RWPE1 (cell line): ENCODE measurements at regions of chr11 and their contacts with region 1.

Region 1: GRCh38 chr11:62591448-62592145 is at the start of gene TUT1:
- DNase-seq: peak; percentile 89
- H3K27ac ChIP-seq: peak within 1 kb of the TSS; percentile 91
- CTCF ChIP-seq: no peak

Region 2: DNA sequence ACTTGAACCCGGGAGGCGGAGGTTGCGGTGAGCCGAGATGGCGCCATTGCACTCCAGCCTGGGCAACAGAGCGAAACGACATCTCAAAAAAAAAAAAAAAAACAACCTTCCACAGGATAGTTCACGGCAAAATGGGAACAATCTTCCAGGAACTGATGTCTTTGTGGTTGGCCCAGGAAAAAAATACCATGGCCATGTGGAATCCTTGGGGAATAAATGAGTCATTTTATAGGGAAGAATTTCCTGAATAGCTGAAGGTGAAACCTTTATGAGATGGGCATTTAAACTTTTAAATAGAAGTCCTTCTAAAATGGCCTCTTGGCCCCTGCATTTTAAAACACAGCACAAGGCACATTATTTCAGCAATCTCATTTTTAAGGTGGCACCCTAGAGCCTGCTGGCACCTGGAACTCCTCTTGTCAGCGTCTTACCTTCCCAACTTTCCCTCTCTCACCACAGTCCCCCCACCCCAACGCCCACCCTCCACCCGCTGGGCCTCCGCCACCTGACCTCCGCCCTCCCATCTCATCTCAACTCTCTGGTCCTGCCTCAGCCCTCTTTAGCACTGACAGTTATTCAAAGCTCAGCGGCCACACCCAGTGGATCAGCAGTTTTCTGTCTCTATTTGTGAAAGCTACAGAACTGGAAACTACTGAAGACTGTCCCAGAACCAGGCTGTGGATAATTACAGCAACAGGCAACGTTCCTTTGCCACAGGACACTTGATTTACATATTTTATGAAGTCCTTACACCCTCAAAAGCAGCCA is 129.7 kb before region 1 on chr11:
- CTCF ChIA-PET with region 1: no interaction called
- POLR2A ChIA-PET with region 1: no interaction called
- DNase-seq: no peak
- H3K27ac ChIP-seq: peak overlapping the region; percentile 41; the same call in 1 of the 2 replicates
- CTCF ChIP-seq: no peak

Region 3: DNA sequence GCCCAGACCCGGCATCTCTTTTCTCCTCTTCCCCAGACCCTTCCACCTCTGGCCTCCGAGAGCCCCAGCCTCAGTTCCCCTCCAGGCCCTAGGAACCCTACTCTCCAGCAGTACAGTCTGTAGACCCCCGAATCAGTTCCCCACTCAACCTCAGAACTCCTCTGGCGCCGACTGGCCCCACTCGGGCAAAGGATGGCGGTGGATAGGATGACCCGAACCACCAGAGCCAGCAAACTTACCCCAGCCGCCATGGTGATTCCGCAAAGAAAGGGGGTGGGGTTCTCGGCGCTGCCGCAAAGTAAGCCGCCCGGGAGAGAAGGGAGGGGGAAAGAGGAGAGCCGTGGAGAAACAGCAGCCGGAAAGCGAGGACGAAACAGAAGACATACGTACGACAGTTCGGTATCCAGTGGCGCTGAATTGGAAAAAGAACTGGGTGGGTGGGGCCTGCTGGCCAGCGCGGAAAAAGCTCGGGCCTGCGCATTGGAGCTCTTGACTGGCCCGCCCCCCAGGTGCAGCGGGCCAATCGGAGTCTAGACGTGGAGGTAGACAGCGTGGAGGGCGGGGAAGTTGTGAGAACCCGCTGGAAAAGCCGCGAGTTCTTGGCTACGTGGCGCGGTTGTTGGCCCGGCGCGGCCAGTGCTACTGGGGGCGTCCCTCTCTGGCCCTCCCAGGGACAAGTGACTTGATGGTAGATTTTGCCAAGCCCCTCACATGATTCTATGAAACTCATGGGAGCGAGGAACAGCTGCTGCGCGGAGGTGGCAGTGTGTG is 17.8 kb before region 1 on chr11 and contains the start of gene EEF1G:
- CTCF ChIA-PET with region 1: interaction called, 3 read pairs
- POLR2A ChIA-PET with region 1: interaction called, 12 read pairs
- DNase-seq: peak; percentile 99
- H3K27ac ChIP-seq: peak within 1 kb of the TSS; percentile 86
- CTCF ChIP-seq: no peak

Region 4: DNA sequence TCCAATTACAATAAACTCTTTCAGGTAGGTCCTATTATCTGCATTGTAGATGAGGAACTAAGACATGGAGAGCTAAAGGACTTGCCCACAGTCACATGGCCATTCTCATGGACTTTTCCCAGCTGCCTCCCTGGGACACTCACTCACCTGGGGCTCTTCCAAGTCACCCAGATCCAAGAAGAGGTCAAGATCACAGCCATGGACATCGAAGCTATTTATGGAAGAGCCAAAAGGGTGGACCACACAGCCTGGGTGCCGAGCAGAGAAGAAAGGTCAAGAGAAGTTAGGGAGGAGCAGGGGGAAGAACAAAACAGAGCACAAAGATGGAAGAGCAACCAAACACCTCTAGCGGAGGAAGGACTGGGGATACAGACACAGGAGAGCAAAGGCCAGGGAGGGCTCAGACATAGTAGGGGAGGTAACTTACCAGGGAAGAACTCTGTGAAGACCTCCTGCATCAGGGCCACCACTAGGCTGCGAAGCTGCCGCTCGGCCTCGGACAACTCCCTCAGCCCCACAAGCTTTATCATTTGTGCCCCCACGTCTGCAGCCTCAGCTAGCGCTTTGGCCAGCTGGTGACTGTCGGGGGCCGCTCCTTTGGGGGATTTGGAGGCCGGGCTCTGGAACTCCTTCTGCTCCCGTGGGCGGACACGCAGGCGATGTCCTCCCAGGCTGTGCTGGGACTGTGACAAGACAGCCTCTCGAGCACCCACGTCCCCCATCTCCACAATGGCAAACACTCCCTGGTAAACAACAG is 10.5 kb before region 1 on chr11:
- CTCF ChIA-PET with region 1: no interaction called
- POLR2A ChIA-PET with region 1: interaction called, 10 read pairs
- DNase-seq: no peak
- H3K27ac ChIP-seq: peak overlapping the region; percentile 13; the same call in 1 of the 2 replicates
- CTCF ChIP-seq: no peak

Region 5: DNA sequence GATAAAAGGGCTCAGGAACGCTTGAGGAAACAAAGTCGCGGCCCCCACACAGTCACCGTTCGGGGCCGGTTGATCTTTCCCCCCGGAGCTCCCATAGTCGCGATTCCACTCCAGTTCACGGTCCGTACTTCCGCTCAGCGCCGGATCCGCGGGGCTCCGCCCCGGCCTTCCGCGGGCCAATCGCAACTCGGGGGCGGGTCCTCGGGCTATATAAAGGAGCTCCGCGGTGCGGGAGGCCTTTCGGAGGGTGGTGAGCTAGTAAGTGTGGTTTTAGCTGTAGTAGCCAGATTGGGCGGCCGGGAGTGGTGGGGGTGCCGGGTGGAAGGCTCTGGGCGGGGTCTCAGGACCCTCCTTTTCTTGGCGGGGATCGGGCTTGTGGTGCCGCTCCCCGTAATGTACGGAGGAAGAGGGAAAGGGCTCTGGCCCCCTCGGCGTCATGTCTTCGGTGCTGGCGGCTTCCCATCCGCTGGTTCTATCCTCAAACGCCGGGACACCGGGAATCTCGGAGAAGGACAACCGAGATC is 73.5 kb after region 1 on chr11 and contains the starts of genes C11orf98 and CSKMT:
- CTCF ChIA-PET with region 1: interaction called, 4 read pairs
- POLR2A ChIA-PET with region 1: interaction called, 16 read pairs
- DNase-seq: peak; percentile 97
- H3K27ac ChIP-seq: peak within 1 kb of the TSS; percentile 90
- CTCF ChIP-seq: no peak

Region 6: GRCh38 chr11:62680825-62681240 is 89.2 kb after region 1 on chr11:
- CTCF ChIA-PET with region 1: no interaction called
- POLR2A ChIA-PET with region 1: no interaction called
- DNase-seq: peak; percentile 69
- H3K27ac ChIP-seq: peak overlapping the region; percentile 88
- CTCF ChIP-seq: peak; percentile 71

Region 7: DNA sequence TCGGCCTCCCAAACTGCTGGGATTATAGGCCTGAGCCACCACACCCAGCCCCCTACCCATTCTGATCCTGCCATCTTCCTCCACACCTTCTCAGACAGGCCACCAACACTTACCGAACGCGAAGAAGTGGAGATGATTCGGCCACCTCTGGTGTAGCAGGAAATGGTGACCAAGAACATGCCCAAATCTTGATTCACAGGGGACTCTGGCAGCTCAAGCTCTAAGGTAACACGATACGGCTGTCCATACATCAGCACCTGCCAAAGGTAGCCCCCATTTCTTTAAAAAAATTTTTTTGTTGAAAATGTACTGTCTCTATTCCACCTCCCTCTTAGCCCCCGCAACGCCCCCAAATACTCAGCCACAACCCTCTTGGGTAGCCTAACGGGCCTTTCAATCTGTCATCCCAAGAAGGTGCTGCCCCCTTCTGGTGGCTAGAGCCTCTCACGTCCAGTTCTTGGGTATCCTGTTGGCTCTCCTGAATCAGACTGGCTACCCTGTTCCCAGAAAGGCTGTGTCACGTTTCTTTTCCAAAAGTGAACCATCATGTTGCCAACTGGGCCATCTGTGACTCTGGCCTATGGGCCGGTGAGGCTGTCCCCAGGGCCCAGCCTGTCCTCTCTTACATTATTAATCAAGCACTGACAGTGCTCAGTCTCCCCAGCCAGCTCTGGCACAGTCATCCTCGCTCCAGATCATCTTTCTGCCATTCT is 103.0 kb after region 1 on chr11:
- CTCF ChIA-PET with region 1: interaction called, 13 read pairs
- POLR2A ChIA-PET with region 1: no interaction called
- DNase-seq: no peak
- H3K27ac ChIP-seq: peak overlapping the region; percentile 54
- CTCF ChIP-seq: peak; percentile 74